Head of caudate nucleus (tissue), 42 donors: ENCODE measurements at regions of chr14 and their contacts with region 1.

Region 1: DNA sequence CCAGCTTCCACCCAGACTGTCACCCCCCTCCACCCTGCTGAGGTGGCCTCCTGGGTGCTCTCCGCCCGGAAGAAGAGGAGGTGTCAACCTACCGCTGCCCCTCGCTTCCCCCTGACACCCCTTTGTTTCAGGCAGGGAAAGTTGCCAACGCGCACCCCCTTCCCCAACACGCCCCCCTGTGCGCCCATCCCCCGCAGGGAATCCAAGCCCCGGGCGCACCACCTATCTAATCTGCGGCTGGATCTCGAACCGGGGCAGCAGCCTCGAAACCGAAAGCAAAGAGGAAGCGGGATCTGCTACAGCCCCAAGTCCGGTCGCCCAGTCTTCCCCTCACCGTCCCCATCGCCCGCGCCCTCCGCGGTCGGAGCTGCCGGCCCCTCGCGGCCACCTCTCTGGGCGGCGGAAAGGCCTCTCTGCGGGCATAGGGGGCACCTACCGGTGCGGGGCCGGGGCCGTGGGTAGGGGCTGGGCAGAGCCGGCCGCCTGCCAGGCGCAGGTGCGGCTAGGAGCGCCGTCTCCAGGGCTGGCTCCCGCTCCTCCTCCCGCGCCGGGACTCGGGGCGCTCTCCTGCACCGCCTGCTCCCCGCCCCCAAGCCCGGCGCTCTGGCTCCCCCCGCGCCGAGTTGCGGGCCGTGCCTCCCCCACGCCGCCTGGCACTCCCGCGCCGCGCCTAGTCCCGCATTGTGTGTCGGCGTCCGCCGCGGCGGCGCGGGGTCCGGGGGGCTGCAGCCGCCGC is 18.3 kb upstream of the PLEKHH1 start:
- DNase-seq: peak in 36 of 42 donors; percentile 41 to 80 (median 62)

Region 2: DNA sequence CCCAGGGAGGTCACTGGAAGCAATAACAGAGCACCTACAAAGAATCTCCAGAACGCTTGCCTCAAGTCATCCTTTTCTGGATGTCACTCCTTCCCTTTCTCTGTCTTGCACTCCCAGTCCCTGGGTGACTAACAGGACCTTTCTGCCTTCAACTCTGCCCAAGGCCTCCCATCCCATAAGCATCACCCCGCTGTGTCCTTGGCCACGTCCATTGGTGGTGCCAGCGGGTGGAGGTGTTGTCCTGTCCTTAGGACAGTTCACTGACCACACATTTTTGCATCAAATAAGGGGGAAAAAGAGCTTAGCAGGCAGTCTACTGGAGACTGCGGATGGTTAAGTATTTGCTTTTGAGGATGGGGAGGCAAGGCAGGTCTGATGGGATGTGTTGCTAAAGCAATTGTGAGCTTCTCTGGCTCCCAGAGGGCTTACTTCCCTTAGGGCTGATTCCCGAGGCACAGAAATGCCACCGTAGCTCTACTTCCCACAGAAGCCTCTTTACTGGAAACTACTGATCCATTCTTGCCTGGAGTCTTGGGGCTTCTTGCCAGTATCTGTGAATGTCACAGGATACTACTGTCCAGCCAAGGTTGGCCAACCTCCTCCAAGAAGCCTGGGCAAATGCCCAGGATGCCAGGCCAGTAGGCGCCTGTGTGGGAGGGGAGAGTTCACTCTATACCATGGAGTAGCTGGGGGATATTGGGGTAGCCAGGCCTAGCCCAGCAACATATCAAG is 79.0 kb before region 1 on chr14:
- intact Hi-C with region 1: loop called (anchors 10 kb)
- DNase-seq: peak in 19 of 42 donors; percentile 11 to 66 (median 34)

Region 3: GRCh38 chr14:67963960-67964744 is 449.3 kb after region 1 on chr14:
- intact Hi-C with region 1: no loop called
- DNase-seq: no peak